ENCODE measurements at regions of chr18 and their contacts with region 1.

Region 1: DNA sequence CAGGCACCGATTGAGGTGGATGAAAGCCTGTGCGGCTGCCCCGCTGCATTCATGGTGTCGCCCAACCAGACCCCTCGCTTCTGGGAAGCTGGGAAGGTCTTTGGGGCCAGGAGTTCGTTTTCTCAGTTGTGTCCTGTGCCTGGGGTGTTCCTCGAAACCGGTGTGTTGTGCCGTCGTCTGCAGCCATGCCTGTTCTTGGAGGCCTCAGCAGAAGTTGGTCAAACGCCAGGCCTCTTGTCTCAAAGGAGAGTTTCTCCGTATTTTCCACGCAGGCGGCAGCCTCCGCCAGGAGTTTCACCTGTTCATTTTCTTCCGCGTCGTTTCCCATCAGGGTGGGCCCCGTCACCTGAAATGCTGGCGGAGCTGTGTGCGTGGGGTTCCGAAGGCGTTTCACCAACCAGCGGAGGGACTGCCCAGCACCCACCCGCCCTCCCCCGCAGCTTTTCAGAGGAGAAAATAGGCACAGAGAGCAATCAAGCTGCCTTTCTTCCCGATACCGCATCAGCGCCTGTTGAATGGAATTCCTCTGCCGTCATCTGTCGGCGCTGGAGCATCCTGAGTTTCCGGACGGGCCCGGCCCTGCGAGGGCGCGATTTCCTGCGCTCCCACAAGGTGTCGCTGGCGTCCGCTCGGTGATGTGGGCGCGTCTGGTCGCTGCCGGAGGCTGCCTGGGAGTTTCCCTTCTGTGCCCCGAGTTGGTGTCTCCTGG is 17.0 kb upstream of the NFATC1 start:
- DNase-seq: peak; percentile 85
- H3K4me3 Mint-ChIP-seq: no peak overlapping the region
- H3K27ac Mint-ChIP-seq: no peak overlapping the region
- H3K4me1 Mint-ChIP-seq: peaks cover 7% of the 10 kb centered on the region
- H3K27me3 Mint-ChIP-seq: no peaks in the 10 kb centered on the region

Region 2: GRCh38 chr18:79393635-79394533 is 15.2 kb after region 1 on chr18:
- CTCF ChIA-PET with region 1: interaction called, 38 read pairs
- DNase-seq: peak; percentile 63
- H3K4me3 Mint-ChIP-seq: peak overlapping the region; percentile 73
- H3K27ac Mint-ChIP-seq: no peak overlapping the region
- H3K4me1 Mint-ChIP-seq: peaks cover 42% of the 10 kb centered on the region
- H3K27me3 Mint-ChIP-seq: peaks cover 57% of the 10 kb centered on the region

Region 3: GRCh38 chr18:79515944-79516351 is 137.3 kb after region 1 on chr18:
- CTCF ChIA-PET with region 1: no interaction called
- DNase-seq: peak; percentile 16
- H3K4me3 Mint-ChIP-seq: no peak overlapping the region
- H3K27ac Mint-ChIP-seq: peak overlapping the region; percentile 87
- H3K4me1 Mint-ChIP-seq: peaks cover 51% of the 10 kb centered on the region
- H3K27me3 Mint-ChIP-seq: no peaks in the 10 kb centered on the region

Region 4: GRCh38 chr18:79528846-79529245 is 150.2 kb after region 1 on chr18:
- CTCF ChIA-PET with region 1: interaction called, 89 read pairs
- DNase-seq: peak; percentile 83
- H3K4me3 Mint-ChIP-seq: no peak overlapping the region
- H3K27ac Mint-ChIP-seq: no peak overlapping the region
- H3K4me1 Mint-ChIP-seq: peaks cover 28% of the 10 kb centered on the region
- H3K27me3 Mint-ChIP-seq: peaks cover 11% of the 10 kb centered on the region

Region 5: GRCh38 chr18:79644006-79644665 is 265.4 kb after region 1 on chr18:
- CTCF ChIA-PET with region 1: interaction called, 73 read pairs
- DNase-seq: peak; percentile 80
- H3K4me3 Mint-ChIP-seq: no peak overlapping the region
- H3K27ac Mint-ChIP-seq: no peak overlapping the region
- H3K4me1 Mint-ChIP-seq: peaks cover 5% of the 10 kb centered on the region
- H3K27me3 Mint-ChIP-seq: peaks cover 25% of the 10 kb centered on the region